Activated CD4-positive, alpha-beta memory T cell treated with anti-CD3 and anti-CD28 coated beads for 36 hours (primary cell): ENCODE measurements at regions of chr19 and their contacts with region 1.

Region 1: DNA sequence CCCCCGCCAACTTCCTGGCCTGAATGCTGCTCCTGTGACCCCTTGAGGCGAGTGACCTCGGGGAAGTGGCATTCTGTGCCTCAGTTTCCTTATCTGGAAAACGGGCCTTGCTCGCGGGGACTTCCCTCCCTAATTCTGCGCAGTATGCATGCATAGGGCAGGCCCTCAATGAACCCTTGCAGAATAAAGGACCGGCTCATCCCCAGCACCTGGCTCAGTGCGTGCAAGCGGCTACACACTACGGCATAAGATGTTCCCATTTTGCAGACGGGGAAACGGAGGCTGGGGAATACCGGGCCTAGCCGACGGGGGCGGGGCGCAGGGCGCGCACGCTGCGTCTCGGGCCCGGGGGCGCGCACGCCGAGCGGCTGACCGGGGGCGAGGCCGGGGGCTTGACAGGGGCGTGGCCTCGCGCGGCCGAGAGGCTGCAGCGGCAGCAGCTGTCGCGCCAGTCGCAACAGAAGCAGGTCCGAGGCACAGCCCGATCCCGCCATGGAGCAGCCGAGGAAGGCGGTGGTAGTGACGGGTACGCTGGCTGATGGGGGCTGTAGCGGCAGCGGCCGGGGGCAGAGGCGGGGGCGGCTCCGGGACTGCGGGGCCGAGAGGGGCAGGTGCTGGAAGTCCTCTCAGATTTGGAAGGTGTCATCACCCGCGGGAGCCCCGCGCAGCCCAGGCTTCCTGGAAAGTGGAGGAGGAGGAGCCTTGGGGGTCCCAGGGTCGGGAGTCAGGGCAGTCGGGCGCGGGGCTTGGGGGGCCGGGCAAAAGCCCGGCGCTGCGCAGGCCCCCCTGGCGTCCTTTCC is at the start of gene PGPEP1:
- DNase-seq: peak; percentile 76
- H3K4me3 Mint-ChIP-seq: peak within 1 kb of the TSS; percentile 79
- H3K27ac Mint-ChIP-seq: peak within 1 kb of the TSS; percentile 87
- H3K4me1 Mint-ChIP-seq: peaks cover 19% of the 10 kb centered on the region
- H3K27me3 Mint-ChIP-seq: no peaks in the 10 kb centered on the region
- total RNA-seq, gene PGPEP1: 29.0 to 30.8 TPM

Region 2: GRCh38 chr19:18357041-18357440 is 16.7 kb after region 1 on chr19:
- CTCF ChIA-PET with region 1: no interaction called
- POLR2A ChIA-PET with region 1: no interaction called
- intact Hi-C with region 1: no loop called
- DNase-seq: no peak
- H3K4me3 Mint-ChIP-seq: no peak overlapping the region
- H3K27ac Mint-ChIP-seq: no peak overlapping the region
- H3K4me1 Mint-ChIP-seq: no peaks in the 10 kb centered on the region
- H3K27me3 Mint-ChIP-seq: no peaks in the 10 kb centered on the region

Region 3: GRCh38 chr19:18373892-18374629 is 33.7 kb after region 1 on chr19:
- CTCF ChIA-PET with region 1: no interaction called
- POLR2A ChIA-PET with region 1: no interaction called
- intact Hi-C with region 1: loop called (anchors 2 kb)
- DNase-seq: peak; percentile 86
- H3K4me3 Mint-ChIP-seq: peak overlapping the region; percentile 6
- H3K27ac Mint-ChIP-seq: peak overlapping the region; percentile 9
- H3K4me1 Mint-ChIP-seq: peaks cover 13% of the 10 kb centered on the region
- H3K27me3 Mint-ChIP-seq: peaks cover 2% of the 10 kb centered on the region

Region 4: DNA sequence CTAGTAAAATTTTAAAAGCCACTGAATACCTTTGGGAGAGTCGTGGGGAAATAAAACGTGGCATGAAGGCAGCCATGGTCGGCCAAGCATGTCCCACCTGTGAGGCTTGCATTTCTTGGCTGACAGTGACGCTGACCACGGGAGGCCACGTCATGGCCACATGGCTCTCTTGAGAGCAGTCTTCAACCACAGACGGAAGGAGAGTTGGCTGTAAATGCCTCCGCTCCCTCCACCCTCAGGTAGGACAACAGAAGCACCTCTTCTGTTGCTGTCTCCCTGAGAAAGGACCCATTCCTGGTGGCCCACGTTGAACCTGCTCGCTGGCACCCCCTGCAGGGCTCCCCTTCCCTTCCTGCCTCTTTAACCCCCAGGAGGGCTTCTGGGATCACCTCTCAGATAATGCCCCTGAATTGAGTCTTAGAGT is 67.7 kb after region 1 on chr19:
- CTCF ChIA-PET with region 1: no interaction called
- POLR2A ChIA-PET with region 1: no interaction called
- intact Hi-C with region 1: loop called (anchors 5 kb)
- DNase-seq: peak; percentile 46
- H3K4me3 Mint-ChIP-seq: no peak overlapping the region
- H3K27ac Mint-ChIP-seq: no peak overlapping the region
- H3K4me1 Mint-ChIP-seq: peaks cover 5% of the 10 kb centered on the region
- H3K27me3 Mint-ChIP-seq: peaks cover 8% of the 10 kb centered on the region